ENCODE measurements at regions of chr10 and their contacts with region 1.

Region 1: GRCh38 chr10:101840741-101841453 is 2.7 kb downstream of the KCNIP2 start:
- DNase-seq: peak; percentile 27
- H3K4me3 ChIP-seq: peak overlapping the region; percentile 29
- H3K27me3 ChIP-seq: no peaks in the 10 kb centered on the region
- CTCF ChIP-seq: peak; percentile 99

Region 2: GRCh38 chr10:101693978-101694673 is 146.8 kb before region 1 on chr10:
- CTCF ChIA-PET with region 1: no interaction called
- POLR2A ChIA-PET with region 1: no interaction called
- DNase-seq: no peak
- H3K4me3 ChIP-seq: peak overlapping the region; percentile 94
- H3K27me3 ChIP-seq: no peaks in the 10 kb centered on the region
- CTCF ChIP-seq: no peak

Region 3: DNA sequence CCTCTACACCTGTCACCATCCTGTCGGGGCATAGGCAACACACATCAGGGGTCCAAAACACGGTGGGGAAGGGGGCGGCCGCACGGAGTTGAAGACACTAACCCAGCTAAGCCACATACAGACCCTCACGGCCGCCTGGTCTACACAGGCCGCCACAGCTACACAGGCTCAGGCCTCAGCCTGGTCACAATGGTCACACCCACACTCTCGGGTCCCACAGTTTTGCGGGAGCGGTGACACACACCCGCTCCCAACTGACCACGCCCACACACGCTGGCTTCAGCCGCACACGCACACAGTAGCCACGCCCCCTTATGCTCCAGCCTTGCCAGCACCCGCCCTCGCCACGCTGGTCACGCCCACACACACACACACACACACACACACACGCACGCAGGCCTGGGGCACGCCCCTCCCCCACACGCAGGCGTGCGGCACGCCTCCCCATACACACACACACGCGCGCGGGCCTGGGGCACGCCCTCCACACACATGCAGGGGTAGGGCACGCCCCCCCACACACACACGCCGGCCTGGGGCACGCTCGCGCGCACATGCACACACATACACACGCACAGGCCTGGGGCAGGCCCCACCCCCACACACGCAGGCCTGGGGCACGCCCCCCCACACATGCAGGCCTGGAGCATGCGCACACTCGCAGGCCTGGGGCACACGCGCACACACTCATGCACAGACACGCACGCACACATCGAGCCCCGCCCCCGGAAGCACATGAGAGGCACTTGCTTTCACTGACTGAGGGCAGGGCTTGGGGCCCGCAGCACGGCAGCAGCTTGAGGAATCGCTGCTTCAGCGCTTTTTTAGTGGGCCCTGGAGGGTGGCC is 10.4 kb before region 1 on chr10:
- CTCF ChIA-PET with region 1: interaction called, 23 read pairs
- POLR2A ChIA-PET with region 1: interaction called, 11 read pairs
- DNase-seq: peak; percentile 37
- H3K4me3 ChIP-seq: peak overlapping the region; percentile 45
- H3K27me3 ChIP-seq: no peaks in the 10 kb centered on the region
- CTCF ChIP-seq: no peak

Region 4: DNA sequence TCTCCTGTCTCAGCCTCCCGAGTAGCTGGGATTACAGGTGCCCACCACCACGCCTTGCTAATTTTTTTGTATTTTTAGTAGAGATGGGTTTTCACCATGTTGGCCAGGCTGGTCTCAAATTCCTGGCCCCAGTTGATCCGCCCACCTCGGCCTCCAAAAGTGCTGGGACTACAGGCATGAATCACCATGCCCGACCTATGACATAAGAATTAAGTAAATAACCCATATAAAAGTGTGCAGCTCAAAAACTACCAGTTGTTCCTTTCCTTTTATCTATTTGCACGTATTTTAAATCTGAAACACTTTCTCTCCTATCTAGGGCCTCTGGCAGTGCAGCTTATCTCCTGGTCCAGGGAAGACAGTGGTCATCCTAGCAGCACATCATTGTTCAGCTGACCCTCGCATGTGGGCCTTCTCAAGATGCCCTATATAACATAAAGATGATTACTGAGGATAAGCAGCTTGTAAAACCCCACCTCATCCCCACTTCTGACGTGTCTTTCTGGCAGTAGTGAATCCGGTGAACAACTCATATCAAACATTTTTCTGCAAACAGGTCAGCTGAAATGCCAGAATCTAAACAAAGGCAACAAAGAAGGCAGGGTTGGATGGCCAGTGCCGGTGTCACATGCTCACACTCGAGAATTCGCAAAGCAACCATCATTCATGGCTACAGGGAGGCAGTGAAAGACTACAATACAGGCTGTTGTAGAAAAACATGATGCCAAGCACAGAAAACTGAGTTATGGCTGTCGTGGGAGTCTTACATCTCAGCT is 38.7 kb after region 1 on chr10:
- CTCF ChIA-PET with region 1: interaction called, 33 read pairs
- POLR2A ChIA-PET with region 1: no interaction called
- DNase-seq: peak; percentile 16
- H3K4me3 ChIP-seq: no peak overlapping the region
- H3K27me3 ChIP-seq: no peaks in the 10 kb centered on the region
- CTCF ChIP-seq: no peak

Region 5: DNA sequence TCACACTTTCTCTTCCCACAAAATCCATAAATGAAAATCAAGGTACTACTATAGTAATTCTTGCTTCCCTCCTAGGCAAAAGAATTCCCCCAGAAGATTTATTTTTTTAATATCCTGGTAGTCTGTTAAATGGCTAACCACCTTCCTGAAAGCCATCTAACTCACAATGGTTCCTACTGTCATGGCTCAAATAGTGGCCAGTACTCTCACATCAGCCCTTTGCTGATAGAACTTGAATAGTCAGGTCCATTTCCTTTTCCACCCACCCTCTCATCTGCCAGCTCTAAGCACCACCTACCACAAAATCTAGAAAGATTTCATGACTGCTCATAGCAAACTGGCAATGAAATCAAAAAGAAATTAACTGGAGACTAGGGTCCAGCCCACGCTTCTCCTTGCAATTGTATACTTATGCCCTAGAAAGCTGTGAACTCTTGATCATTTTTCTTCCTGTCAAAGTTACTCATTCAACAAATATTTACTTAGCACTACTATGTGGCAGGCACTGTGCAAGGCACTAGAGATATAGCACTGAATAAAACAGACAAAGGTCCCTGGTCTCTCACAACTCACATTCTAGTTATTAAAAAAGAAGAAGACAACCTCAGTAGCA is 154.7 kb after region 1 on chr10:
- CTCF ChIA-PET with region 1: interaction called, 17 read pairs
- POLR2A ChIA-PET with region 1: no interaction called
- DNase-seq: no peak
- H3K4me3 ChIP-seq: no peak overlapping the region
- H3K27me3 ChIP-seq: no peaks in the 10 kb centered on the region
- CTCF ChIP-seq: no peak

Region 6: GRCh38 chr10:102020938-102021337 is 180.0 kb after region 1 on chr10:
- CTCF ChIA-PET with region 1: interaction called, 24 read pairs
- POLR2A ChIA-PET with region 1: no interaction called
- DNase-seq: no peak
- H3K4me3 ChIP-seq: no peak overlapping the region
- H3K27me3 ChIP-seq: no peaks in the 10 kb centered on the region
- CTCF ChIP-seq: no peak

Region 7: GRCh38 chr10:102072673-102073527 is 232.0 kb after region 1 on chr10:
- CTCF ChIA-PET with region 1: interaction called, 22 read pairs
- POLR2A ChIA-PET with region 1: no interaction called
- DNase-seq: no peak
- H3K4me3 ChIP-seq: no peak overlapping the region
- H3K27me3 ChIP-seq: no peaks in the 10 kb centered on the region
- CTCF ChIP-seq: peak; percentile 95